Aorta (tissue), 5 donors: ENCODE measurements at regions of chr14 and their contacts with region 1.

Region 1: GRCh38 chr14:73728717-73729330 is 14.6 kb upstream of the PNMA1 start:
- DNase-seq: peak; percentile 91 to 93
- ATAC-seq: peak; percentile 74
- H3K4me3 ChIP-seq: no peak overlapping the region
- H3K27ac ChIP-seq: peak overlapping the region in 1 of 2 donors; percentile 52
- H3K4me1 ChIP-seq: no peaks in the 10 kb centered on the region
- H3K27me3 ChIP-seq: no peaks in the 10 kb centered on the region

Region 2: DNA sequence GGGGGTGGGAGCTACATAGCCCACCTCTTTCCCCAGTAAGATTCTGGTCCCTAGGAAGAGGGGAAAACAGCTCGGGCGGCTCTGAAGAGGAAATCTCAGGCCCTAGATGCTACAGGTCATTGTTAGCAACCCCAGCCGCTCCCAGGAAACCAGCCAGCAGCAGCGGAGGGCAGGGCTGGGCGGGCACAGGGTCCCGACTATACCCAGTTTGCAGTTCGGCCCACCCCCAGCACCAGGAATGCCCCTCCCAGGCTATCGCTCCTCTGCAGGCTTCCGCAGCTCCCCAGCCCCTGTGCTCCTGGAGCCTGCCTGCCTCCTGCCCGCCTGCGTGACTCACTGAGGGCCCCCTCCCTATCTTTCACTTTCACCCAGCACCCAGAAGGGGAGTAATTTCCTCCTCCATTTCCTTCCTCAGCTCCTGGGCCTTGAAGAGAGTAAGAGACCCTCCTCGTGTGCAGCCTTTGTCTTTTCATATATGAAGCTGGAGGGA is 12.6 kb after region 1 on chr14:
- intact Hi-C with region 1: no loop called
- DNase-seq: peak; percentile 86 to 88
- ATAC-seq: peak; percentile 84
- H3K4me3 ChIP-seq: no peak overlapping the region
- H3K27ac ChIP-seq: peak overlapping the region in 1 of 2 donors; percentile 80
- H3K4me1 ChIP-seq: peaks cover 0 to 5% of the 10 kb centered on the region in 2 donors
- H3K27me3 ChIP-seq: no peaks in the 10 kb centered on the region

Region 3: DNA sequence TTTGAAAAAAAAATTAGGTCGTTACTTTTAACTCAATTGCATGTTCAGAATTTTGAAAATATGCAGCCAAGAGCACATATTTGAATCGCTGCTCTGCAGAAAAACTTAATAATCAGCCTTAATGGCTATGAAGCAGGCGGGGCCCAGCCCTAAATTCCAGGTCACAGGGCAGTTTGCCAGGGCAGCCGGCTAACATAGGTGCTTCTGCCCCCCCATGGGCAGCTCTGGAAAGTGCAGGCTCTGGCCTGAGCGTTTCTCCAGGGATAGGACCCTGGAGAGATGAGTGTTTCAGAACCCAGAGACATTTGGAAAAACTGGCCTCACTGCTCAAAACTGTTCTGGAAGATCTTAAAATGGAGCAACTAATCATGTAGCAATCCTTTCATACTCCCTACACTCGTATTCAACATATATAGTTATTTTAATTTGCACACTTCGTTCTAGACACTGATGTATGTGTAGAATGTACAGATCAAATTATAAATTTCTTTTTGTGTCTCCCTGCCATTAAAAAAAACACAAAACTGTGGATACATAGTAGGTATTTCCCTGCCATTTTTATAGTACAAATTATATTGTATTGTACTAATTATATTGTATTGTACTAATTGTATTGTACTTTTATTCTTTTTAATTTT is 96.8 kb after region 1 on chr14:
- intact Hi-C with region 1: loop called (anchors 1 kb)
- DNase-seq: peak; percentile 94 to 97
- ATAC-seq: peak; percentile 95
- H3K4me3 ChIP-seq: no peak overlapping the region
- H3K27ac ChIP-seq: no peak overlapping the region
- H3K4me1 ChIP-seq: no peaks in the 10 kb centered on the region
- H3K27me3 ChIP-seq: no peaks in the 10 kb centered on the region

Region 4: GRCh38 chr14:73886449-73887317 is 157.9 kb after region 1 on chr14 and contains the start of gene ZNF410:
- intact Hi-C with region 1: loop called in 1 of 2 experiments (anchors 5 kb)
- DNase-seq: peak; percentile 97
- ATAC-seq: peak; percentile 99
- H3K4me3 ChIP-seq: peak within 1 kb of the TSS; percentile 82 to 98
- H3K27ac ChIP-seq: peak within 1 kb of the TSS; percentile 78 to 92
- H3K4me1 ChIP-seq: peaks cover 0 to 4% of the 10 kb centered on the region in 2 donors
- H3K27me3 ChIP-seq: no peaks in the 10 kb centered on the region
- total RNA-seq, gene ZNF410: 42.9 to 45.7 TPM